T-cell (primary cell): ENCODE measurements at regions of chr14 and their contacts with region 1.

Region 1: DNA sequence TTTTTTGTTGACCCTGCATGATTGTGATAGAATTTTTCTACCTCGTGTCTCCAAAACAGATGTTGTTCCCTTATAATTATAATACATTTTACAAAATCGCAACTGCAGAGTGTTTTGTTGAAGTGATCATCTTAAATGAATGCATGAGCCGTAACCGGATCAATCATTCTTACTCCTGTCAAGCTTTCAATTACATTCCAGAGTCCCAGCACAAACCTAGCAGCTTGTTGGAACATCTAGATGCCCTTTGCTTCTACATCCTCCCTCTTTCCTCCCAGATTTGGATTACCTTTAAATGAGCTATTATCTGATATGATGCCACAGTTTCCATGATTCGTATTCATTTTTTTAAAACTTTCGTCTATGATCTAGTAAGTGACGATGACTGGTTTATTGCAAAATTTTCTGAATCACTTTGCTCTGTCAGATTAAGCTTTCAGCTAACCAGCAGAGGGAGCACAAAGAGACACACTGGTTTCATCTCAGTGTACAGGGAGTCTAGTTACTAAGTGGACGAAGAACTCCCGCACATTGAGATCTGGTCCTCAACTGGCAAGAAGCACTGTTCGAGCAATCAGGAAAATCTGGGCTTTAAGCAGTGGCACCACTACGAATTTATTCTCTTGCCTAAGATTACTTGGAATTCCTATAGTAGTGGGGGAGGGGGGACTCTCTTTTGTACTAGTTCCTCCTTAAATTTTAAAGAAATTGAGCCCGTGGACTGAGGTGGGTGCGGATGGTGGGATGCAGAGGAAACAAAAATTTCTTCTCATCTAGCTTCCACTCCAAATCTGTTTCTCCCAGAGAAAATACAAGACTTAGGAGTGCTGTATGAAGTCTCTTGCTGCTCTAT is 40.9 kb downstream of the TSHR start:
- DNase-seq: peak in 13 of 35 experiments; percentile 4 to 58 (median 15)
- ATAC-seq: peak in 3 of 4 experiments; percentile 67 to 78 (median 69)
- H3K4me3 ChIP-seq: no peak overlapping the region
- H3K4me3 Mint-ChIP-seq: no peak overlapping the region
- H3K27ac ChIP-seq: no peak overlapping the region
- H3K27ac Mint-ChIP-seq: no peak overlapping the region
- H3K4me1 ChIP-seq: no peaks in the 10 kb centered on the region
- H3K4me1 Mint-ChIP-seq: peaks cover 0 to 7% (median 5%) of the 10 kb centered on the region in 3 donors
- H3K27me3 ChIP-seq: no peaks in the 10 kb centered on the region
- H3K27me3 Mint-ChIP-seq: peaks cover 11 to 19% of the 10 kb centered on the region in 2 donors

Region 2: DNA sequence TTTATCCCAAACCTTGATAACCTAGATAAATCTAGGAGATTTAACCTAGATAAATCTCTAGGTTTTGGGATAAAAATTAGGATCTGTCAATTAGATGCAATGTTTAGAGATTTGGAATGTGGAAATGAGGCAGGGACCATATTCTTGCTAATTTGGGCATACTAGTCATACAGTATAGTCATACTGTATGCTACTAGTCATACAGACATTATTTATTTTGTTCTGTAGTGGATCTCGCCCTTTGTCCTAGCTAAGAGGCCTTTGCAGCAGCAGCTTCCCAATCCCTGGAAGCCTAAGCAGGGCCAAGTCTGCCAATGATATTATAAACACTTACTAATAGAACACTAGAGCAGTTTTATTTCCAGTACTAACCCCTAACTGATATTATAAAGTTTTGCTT is 191.1 kb before region 1 on chr14:
- CTCF ChIA-PET with region 1: no interaction called
- POLR2A ChIA-PET with region 1: no interaction called
- DNase-seq: no peak
- ATAC-seq: no peak
- H3K4me3 ChIP-seq: no peak overlapping the region
- H3K4me3 Mint-ChIP-seq: no peak overlapping the region
- H3K27ac ChIP-seq: no peak overlapping the region
- H3K27ac Mint-ChIP-seq: no peak overlapping the region
- H3K4me1 ChIP-seq: no peaks in the 10 kb centered on the region
- H3K4me1 Mint-ChIP-seq: peaks cover 0 to 2% (median 0%) of the 10 kb centered on the region in 3 donors
- H3K27me3 ChIP-seq: no peaks in the 10 kb centered on the region
- H3K27me3 Mint-ChIP-seq: no peaks in the 10 kb centered on the region

Region 3: GRCh38 chr14:80973931-80974641 is 22.2 kb before region 1 on chr14:
- CTCF ChIA-PET with region 1: interaction called, 4 to 13 read pairs
- POLR2A ChIA-PET with region 1: interaction called in 1 of 2 experiments, 7 read pairs
- DNase-seq: peak in 4 of 35 experiments; percentile 10 to 25 (median 12)
- ATAC-seq: peak; percentile 33 to 50 (median 40)
- H3K4me3 ChIP-seq: no peak overlapping the region
- H3K4me3 Mint-ChIP-seq: peak overlapping the region in 1 of 3 donors; percentile 31
- H3K27ac ChIP-seq: no peak overlapping the region
- H3K27ac Mint-ChIP-seq: peak overlapping the region in 1 of 2 donors; percentile 64
- H3K4me1 ChIP-seq: peaks cover 2 to 6% of the 10 kb centered on the region in 2 experiments
- H3K4me1 Mint-ChIP-seq: peaks cover 21 to 35% (median 25%) of the 10 kb centered on the region in 3 donors
- H3K27me3 ChIP-seq: no peaks in the 10 kb centered on the region
- H3K27me3 Mint-ChIP-seq: peaks cover 2 to 3% of the 10 kb centered on the region in 2 donors

Region 4: DNA sequence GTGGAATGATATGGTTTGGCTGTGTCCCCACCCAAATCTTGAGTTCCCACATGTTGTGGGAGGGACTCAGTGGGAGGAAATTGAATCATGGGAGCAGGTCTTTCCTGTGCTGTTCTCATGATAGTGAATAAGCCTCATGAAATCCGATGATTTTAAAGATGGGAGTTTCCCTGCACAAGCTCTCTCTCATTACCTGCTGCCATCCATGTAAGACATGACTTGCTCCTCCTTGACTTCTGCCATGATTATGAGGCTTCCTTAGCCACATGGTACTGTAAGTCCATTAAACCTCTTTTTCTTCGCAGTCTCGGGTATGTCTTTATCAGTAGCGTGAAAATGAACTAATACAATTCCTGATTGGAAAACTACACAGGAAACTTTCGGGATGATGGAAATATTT is 59.7 kb after region 1 on chr14:
- CTCF ChIA-PET with region 1: no interaction called
- POLR2A ChIA-PET with region 1: no interaction called
- DNase-seq: no peak
- ATAC-seq: no peak
- H3K4me3 ChIP-seq: no peak overlapping the region
- H3K4me3 Mint-ChIP-seq: no peak overlapping the region
- H3K27ac ChIP-seq: no peak overlapping the region
- H3K27ac Mint-ChIP-seq: no peak overlapping the region
- H3K4me1 ChIP-seq: no peaks in the 10 kb centered on the region
- H3K4me1 Mint-ChIP-seq: no peaks in the 10 kb centered on the region
- H3K27me3 ChIP-seq: no peaks in the 10 kb centered on the region
- H3K27me3 Mint-ChIP-seq: no peaks in the 10 kb centered on the region

Region 5: GRCh38 chr14:81170104-81170828 is 174.0 kb after region 1 on chr14:
- CTCF ChIA-PET with region 1: interaction called, 7 to 22 read pairs
- POLR2A ChIA-PET with region 1: no interaction called
- DNase-seq: peak; percentile 76 to 92 (median 85)
- ATAC-seq: peak; percentile 98 to 99 (median 98)
- H3K4me3 ChIP-seq: peak overlapping the region; percentile 74 to 85
- H3K4me3 Mint-ChIP-seq: peak overlapping the region; percentile 85 to 89 (median 88)
- H3K27ac ChIP-seq: peak overlapping the region; percentile 80
- H3K27ac Mint-ChIP-seq: peak overlapping the region; percentile 93 to 97
- H3K4me1 ChIP-seq: peaks cover 8 to 17% of the 10 kb centered on the region in 2 experiments
- H3K4me1 Mint-ChIP-seq: peaks cover 20 to 27% (median 24%) of the 10 kb centered on the region in 3 donors
- H3K27me3 ChIP-seq: no peaks in the 10 kb centered on the region
- H3K27me3 Mint-ChIP-seq: no peaks in the 10 kb centered on the region

Region 6: GRCh38 chr14:81256289-81256960 is 260.1 kb after region 1 on chr14:
- CTCF ChIA-PET with region 1: no interaction called
- POLR2A ChIA-PET with region 1: no interaction called
- DNase-seq: no peak
- ATAC-seq: no peak
- H3K4me3 ChIP-seq: no peak overlapping the region
- H3K4me3 Mint-ChIP-seq: no peak overlapping the region
- H3K27ac ChIP-seq: no peak overlapping the region
- H3K27ac Mint-ChIP-seq: no peak overlapping the region
- H3K4me1 ChIP-seq: no peaks in the 10 kb centered on the region
- H3K4me1 Mint-ChIP-seq: no peaks in the 10 kb centered on the region
- H3K27me3 ChIP-seq: no peaks in the 10 kb centered on the region
- H3K27me3 Mint-ChIP-seq: peaks cover 10 to 27% of the 10 kb centered on the region in 2 donors

Region 7: DNA sequence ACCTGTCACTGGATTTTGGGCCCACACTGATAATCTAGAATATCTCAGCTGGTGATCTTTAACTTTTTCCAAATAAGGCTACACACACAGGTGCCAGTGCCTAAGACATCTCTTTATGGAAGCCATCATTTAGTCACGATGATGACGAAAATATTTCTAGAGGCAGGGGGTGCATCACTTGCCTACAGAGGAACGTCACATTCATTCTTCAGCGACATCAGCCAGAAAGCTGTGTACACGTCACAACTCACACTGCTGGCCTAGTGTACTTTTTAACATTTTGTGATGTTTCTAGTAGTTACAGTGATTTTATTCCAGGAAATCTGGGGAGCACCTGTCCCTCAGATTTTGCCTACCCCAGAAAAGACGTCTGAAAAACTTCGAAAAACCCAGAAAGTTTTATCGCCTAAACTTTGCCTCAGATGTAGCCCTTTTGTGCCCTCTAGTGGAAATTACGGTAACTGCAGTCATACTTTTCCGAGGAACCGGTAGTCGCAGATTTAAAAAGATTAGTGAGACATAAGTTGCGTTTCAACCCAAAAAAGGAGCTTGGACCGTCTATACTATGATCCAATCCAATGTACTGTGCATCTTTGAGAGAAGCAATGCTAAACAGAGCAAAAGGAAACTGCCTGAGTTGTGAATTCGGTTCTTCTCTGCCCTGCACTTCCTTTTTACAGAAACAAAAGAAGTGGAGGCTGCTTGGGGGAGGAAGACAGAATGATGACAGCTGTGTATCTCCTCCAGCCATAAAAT is 468.1 kb after region 1 on chr14:
- CTCF ChIA-PET with region 1: interaction called, 4 to 10 read pairs
- POLR2A ChIA-PET with region 1: interaction called in 1 of 2 experiments, 4 read pairs
- DNase-seq: peak in 32 of 35 experiments; percentile 16 to 87 (median 40)
- ATAC-seq: peak; percentile 82
- H3K4me3 ChIP-seq: peak overlapping the region; percentile 62 to 82
- H3K4me3 Mint-ChIP-seq: peak overlapping the region; percentile 79 to 83 (median 80)
- H3K27ac ChIP-seq: peak overlapping the region; percentile 71
- H3K27ac Mint-ChIP-seq: peak overlapping the region; percentile 90 to 92
- H3K4me1 ChIP-seq: no peaks in the 10 kb centered on the region
- H3K4me1 Mint-ChIP-seq: peaks cover 0 to 8% (median 6%) of the 10 kb centered on the region in 3 donors
- H3K27me3 ChIP-seq: no peaks in the 10 kb centered on the region
- H3K27me3 Mint-ChIP-seq: peaks cover 0 to 1% of the 10 kb centered on the region in 2 donors

Region 8: DNA sequence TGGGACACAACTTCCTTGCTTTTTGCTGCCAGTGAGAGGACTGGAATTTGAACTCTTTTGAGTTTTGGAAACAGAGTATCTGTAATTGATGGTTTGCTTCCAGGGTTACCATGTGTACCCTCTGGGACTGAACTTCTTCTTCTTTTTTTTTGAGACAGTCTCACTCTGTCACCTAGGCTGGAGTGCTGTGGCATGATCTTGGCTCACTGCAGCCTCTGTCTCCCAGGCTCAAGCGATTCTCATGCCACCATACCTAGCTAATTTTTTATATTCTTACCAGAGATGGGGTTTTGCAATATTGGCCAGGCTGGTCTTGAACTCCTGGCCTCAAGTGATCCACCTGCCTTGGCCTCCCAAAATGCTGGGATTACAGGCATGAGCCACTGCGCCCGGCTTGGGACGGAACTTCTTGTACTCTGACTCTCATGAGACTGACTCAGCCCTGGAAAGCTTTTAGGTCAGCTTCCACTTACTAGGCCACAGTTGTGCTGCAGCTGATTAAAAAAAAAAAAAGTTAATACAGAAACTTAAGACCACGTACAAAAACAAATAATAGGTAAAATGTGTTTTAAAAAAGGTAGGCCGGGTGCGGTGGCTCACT is 521.6 kb after region 1 on chr14:
- CTCF ChIA-PET with region 1: no interaction called
- POLR2A ChIA-PET with region 1: interaction called in 1 of 2 experiments, 10 read pairs
- DNase-seq: no peak
- ATAC-seq: no peak
- H3K4me3 ChIP-seq: no peak overlapping the region
- H3K4me3 Mint-ChIP-seq: no peak overlapping the region
- H3K27ac ChIP-seq: no peak overlapping the region
- H3K27ac Mint-ChIP-seq: no peak overlapping the region
- H3K4me1 ChIP-seq: peaks cover 10 to 16% of the 10 kb centered on the region in 2 experiments
- H3K4me1 Mint-ChIP-seq: peaks cover 33 to 48% (median 46%) of the 10 kb centered on the region in 3 donors
- H3K27me3 ChIP-seq: no peaks in the 10 kb centered on the region
- H3K27me3 Mint-ChIP-seq: no peaks in the 10 kb centered on the region